Psoas muscle (tissue), 8 donors: ENCODE measurements at regions of chr11 and their contacts with region 1.

Region 1: DNA sequence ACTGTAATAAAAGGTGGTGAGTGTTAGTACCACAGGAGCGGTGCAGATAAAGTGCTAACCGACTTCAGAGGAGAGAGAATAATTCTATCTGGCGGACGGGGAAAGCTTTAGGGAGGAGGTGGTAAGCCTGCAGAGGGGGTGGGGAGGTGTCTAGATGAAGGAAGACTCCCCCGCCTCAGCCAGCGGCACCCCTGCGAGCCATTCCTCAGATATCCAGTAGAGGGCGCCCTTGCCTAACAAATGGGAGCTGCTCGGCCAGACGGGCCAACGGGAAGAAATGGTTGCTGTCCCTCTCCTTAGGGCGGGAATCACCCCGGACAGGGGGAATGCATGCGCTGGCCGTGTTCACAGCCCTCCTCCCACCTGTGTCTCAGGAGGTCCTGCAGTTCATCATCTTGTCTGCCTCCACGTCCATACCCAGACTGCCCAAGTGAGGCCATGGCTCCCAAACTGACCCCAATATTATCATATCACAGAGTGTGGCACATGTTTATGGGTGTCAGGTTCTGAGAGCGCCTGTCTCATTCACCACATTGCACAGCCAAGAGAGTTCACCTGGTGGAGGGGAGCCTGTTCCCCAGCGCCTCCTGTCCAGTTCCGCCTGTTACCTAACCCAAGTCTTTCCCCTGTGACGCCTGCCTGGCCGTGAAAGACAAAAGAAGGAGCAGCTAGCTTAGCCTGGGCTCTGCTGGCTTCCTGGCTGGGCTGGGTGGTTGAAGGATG is 85.5 kb downstream of the ST3GAL4 start:
- DNase-seq: peak; percentile 74 to 86
- ATAC-seq: peak; percentile 82 to 96 (median 87)
- H3K4me3 ChIP-seq: no peak overlapping the region
- H3K27ac ChIP-seq: no peak overlapping the region
- H3K4me1 ChIP-seq: no peaks in the 10 kb centered on the region
- H3K27me3 ChIP-seq: peaks cover 0 to 1% (median 0%) of the 10 kb centered on the region in 3 donors
- CTCF ChIP-seq: peak; percentile 97

Region 2: DNA sequence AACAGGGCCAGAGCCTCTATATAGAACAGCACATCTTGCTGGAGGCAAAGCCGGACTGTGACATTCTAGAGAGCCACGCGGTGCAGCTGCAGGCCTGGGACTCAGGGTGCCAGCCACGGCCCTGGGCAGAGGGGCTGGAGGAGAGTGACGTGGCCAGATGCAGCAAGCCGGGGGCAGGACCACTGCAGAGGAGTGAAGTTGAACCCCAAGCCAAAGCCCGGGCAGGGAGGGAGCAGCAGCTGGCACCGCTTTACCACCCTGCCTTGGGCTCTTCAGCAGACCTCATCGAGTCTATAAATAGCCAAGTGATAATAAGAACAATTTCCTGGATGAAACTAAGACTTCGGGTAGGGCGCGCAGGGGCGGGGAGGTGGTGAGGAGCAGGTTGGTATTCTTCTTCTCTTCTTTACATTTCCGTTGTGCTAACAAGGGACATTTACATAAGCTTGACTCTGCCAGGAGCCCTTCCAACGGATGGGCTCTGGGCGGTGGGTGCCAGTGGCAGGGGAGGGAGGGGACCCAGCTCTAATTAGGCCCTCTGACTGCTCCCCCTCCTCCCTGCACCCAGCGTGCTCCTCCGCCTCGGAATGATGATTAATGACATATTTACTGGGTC is 24.7 kb after region 1 on chr11:
- intact Hi-C with region 1: no loop called
- DNase-seq: no peak
- ATAC-seq: peak; percentile 42 to 77 (median 64)
- H3K4me3 ChIP-seq: no peak overlapping the region
- H3K27ac ChIP-seq: no peak overlapping the region
- H3K4me1 ChIP-seq: no peaks in the 10 kb centered on the region
- H3K27me3 ChIP-seq: peaks cover 0 to 7% (median 0%) of the 10 kb centered on the region in 3 donors
- CTCF ChIP-seq: no peak

Region 3: GRCh38 chr11:126480410-126481302 is 39.7 kb after region 1 on chr11:
- intact Hi-C with region 1: loop called (anchors 2 to 5 kb)
- DNase-seq: peak; percentile 79 to 86
- ATAC-seq: peak; percentile 86 to 91 (median 90)
- H3K4me3 ChIP-seq: peak overlapping the region; percentile 31
- H3K27ac ChIP-seq: peak overlapping the region; percentile 50
- H3K4me1 ChIP-seq: no peaks in the 10 kb centered on the region
- H3K27me3 ChIP-seq: no peaks in the 10 kb centered on the region
- CTCF ChIP-seq: peak; percentile 94

Region 4: DNA sequence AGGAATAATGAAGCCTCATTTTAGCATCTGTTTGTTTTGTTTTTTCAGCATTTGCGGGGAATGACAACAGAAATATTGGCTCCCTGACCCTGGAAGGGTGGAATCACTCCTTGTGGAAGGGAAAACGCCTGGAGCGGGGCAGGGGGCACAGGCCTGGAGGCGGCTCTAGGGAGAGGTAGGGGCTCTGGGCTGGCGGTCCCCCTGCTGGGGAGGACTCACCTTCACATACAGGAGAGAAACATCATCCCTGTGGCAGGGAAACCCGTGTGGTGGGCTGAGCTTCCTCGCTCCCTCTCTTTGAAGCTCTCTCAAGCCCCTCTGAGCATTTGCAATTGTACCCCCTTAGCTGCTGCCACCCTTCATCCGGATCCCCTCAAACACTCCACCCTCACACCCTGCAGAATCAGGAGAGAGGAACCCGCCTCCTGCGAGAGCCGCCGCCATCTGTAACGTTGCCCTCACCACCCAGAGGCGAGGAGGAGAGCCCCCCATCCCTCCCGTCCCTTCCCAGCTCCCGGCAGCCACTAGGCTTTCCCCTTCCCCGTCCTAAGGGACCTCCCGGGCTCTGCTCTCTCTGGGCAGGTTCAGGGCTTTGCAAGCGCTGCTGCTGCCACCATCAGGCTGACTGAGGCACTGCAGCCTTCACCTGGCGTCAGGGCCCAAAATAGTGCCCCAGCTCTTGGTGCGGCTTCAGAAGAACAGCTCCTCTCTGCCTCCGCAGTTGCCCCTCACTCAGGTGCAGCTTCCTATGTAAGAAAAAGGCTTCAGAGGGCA is 549.2 kb after region 1 on chr11:
- intact Hi-C with region 1: loop called (anchors 2 kb)
- DNase-seq: peak; percentile 60 to 74
- ATAC-seq: peak; percentile 74 to 81 (median 76)
- H3K4me3 ChIP-seq: no peak overlapping the region
- H3K27ac ChIP-seq: no peak overlapping the region
- H3K4me1 ChIP-seq: no peaks in the 10 kb centered on the region
- H3K27me3 ChIP-seq: peaks cover 0 to 8% (median 2%) of the 10 kb centered on the region in 3 donors
- CTCF ChIP-seq: peak; percentile 78

Region 5: DNA sequence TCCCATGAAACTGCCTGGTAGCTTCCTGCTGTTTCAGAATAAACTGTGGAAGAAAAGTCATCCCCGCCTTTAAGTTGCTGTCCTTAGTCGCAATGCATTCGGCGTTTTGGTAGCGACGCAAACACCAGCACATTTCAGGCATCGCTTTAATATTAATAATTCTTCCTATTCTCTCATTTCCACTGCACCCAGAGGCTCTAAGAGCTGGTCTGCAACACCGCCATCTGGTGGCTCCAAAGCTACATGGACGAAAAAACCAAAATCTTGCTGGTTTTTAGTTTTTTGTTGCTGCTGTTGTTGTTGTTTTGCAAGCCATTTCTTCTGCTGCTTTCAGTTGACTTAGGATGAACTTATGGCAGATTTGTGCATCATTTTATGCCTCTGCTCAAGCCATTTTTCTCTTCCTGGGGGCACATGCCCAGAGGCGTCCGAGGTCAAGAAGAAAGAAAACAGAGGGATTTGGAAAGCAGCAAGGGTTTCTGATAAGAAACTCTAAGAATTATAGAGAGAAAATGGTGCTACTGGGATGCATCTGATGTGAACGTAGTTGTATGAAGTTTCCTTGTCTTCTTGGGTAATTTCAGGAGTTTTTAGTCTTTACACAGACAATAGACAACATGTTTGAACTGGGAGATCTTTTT is 905.0 kb after region 1 on chr11:
- intact Hi-C with region 1: loop called (anchors 2 to 5 kb)
- DNase-seq: no peak
- ATAC-seq: no peak
- H3K4me3 ChIP-seq: no peak overlapping the region
- H3K27ac ChIP-seq: no peak overlapping the region
- H3K4me1 ChIP-seq: no peaks in the 10 kb centered on the region
- H3K27me3 ChIP-seq: peaks cover 0 to 3% (median 3%) of the 10 kb centered on the region in 3 donors
- CTCF ChIP-seq: peak; percentile 56